Ascending aorta (tissue), 2 donors: ENCODE measurements at regions of chr10 and their contacts with region 1.

Region 1: GRCh38 chr10:47300429-47300931 is 483 bp downstream of the GDF10 start:
- DNase-seq: no peak
- H3K4me3 ChIP-seq: peak overlapping the region; percentile 65 to 77
- H3K27ac ChIP-seq: peak overlapping the region in 1 of 2 donors; percentile 48
- H3K4me1 ChIP-seq: peaks cover 0 to 31% of the 10 kb centered on the region in 2 donors
- H3K27me3 ChIP-seq: no peaks in the 10 kb centered on the region
- CTCF ChIP-seq: peak in 2 of 3 experiments; percentile 13 to 23

Region 2: GRCh38 chr10:47257396-47258120 is 42.9 kb before region 1 on chr10:
- intact Hi-C with region 1: loop called (anchors 2 kb)
- DNase-seq: no peak
- H3K4me3 ChIP-seq: no peak overlapping the region
- H3K27ac ChIP-seq: no peak overlapping the region
- H3K4me1 ChIP-seq: peaks cover 6 to 22% of the 10 kb centered on the region in 2 donors
- H3K27me3 ChIP-seq: no peaks in the 10 kb centered on the region
- CTCF ChIP-seq: no peak

Region 3: DNA sequence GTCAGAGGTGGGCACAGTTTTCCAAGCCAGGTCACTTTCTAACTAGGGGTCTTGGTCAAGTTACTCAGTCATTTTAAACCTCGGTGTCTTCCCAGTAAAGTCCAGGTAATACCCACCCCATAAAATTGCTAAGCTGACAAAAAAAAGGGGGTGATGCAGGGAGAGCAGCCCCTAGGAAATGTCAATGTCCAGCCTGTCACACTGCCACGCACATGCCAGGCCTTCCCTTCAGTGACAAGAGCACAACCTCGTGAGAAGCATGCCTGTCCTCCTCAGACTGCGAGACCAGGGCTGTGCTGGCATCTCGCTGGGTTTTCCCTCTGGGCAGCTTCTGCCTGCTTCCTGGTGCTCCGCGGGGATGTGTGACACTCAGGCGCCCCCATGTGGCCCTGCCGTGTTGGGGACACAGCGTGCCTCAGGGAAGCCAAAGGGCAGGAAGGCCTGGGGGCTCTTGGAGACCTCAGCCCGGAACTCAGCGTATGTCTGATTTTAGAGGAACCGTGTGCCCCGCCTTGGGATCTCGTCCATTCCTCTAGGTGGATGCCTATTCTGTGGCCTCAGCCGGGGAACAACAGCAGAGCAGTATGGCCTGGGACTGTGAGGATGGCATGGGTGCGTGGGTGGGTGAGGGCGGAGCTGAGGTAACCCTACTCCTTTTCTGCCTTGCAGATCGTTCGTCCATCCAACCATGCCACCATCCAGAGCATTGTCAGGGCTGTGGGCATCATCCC is 11.6 kb after region 1 on chr10:
- intact Hi-C with region 1: no loop called
- DNase-seq: peak; percentile 36 to 92
- H3K4me3 ChIP-seq: no peak overlapping the region
- H3K27ac ChIP-seq: no peak overlapping the region
- H3K4me1 ChIP-seq: peaks cover 2% of the 10 kb centered on the region in 2 donors
- H3K27me3 ChIP-seq: no peaks in the 10 kb centered on the region
- CTCF ChIP-seq: peak; percentile 91 to 97 (median 95)

Region 4: DNA sequence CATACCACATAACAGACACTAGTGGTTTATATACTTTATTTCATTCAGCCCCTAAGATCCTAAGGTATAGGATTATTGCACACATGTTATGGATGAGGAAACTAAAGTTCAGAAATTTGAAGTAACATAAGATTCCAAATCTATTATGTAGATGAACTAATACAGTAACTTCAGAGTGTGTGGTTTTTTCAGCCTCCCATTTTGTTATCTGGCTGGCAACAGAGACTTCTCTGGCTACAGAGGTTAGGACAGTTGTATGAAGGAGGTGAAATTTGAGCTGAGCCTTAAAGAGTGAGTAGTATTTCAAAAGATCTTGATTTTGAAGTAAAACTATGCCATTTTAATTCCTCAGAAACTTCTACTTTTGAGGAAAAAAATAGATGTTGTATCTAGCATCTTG is 1131.4 kb after region 1 on chr10:
- intact Hi-C with region 1: no loop called
- DNase-seq: no peak
- H3K4me3 ChIP-seq: no peak overlapping the region
- H3K27ac ChIP-seq: no peak overlapping the region
- H3K4me1 ChIP-seq: no peaks in the 10 kb centered on the region
- H3K27me3 ChIP-seq: no peaks in the 10 kb centered on the region
- CTCF ChIP-seq: no peak